Astrocyte of the cerebellum (primary cell): ENCODE measurements at regions of chr2 and their contacts with region 1.

Region 1: DNA sequence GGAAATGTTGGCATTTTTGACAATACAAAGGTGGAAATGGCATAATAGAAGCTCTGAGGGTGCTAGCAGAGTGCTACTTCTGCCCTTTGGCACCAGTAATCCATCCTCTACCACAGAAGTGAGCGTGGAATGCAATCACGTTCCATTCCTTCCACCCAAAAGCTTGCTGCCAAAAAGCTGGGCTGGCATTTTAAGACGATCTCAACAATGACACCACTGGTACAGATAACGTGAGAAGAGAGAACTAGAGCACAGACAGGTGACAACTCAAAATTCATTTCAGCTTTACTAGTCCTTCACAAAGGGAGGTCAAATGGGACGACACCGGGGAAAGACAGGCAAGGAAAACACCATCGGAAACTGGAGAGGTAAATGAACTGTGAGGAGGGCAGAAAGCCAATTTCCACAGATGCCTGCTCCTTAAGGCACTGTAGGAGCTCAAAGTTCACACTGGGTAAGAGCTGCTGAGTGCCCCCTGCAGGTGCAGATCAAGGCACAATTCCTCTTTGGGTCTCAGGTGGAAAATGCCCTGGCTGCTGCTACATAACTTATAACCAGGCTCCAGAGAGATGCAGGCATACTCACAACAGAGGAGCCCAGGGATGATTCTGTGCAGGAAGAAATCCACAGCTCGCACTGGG is 50.7 kb upstream of the RNU4ATAC start:
- DNase-seq: no peak
- H3K4me3 ChIP-seq: no peak overlapping the region
- CTCF ChIP-seq: peak; percentile 44

Region 2: GRCh38 chr2:121429119-121429903 is 50.7 kb before region 1 on chr2:
- in situ Hi-C with region 1: loop called (anchors 10 kb)
- DNase-seq: peak; percentile 5
- H3K4me3 ChIP-seq: no peak overlapping the region
- CTCF ChIP-seq: no peak